ENCODE measurements at regions of chr11 and their contacts with region 1.

Region 1: GRCh38 chr11:33362051-33362910 is 105.1 kb downstream of the HIPK3 start:
- DNase-seq: no peak
- H3K4me3 ChIP-seq: no peak overlapping the region
- H3K27ac ChIP-seq: no peak overlapping the region
- H3K4me1 ChIP-seq: no peaks in the 10 kb centered on the region
- H3K27me3 ChIP-seq: no peaks in the 10 kb centered on the region
- CTCF ChIP-seq: peak; percentile 60 to 77 (median 77)
- POLR2A ChIP-seq: no peak

Region 2: DNA sequence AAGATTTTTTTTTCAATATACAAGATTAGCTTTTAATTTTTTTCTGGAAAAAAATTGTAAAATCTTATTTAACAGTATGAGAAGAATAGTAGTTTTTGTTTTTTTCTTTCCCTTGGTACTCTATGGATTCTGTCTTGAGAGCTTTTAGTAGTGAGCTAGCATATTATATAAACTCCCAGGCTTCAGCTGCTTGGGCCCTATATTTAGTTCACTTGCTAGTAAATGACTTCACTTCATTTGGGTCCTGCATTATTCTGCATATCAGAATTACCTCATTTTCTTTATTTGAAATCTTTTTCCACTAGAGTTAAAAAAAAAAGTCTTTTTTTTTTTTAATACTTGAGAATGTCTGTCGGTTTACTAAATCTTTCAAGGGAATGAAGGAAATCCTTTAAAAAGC is 72.0 kb before region 1 on chr11:
- intact Hi-C with region 1: no loop called
- DNase-seq: no peak
- H3K4me3 ChIP-seq: no peak overlapping the region
- H3K27ac ChIP-seq: no peak overlapping the region
- H3K4me1 ChIP-seq: peaks cover 50% of the 10 kb centered on the region
- H3K27me3 ChIP-seq: no peaks in the 10 kb centered on the region
- CTCF ChIP-seq: no peak
- POLR2A ChIP-seq: no peak

Region 3: DNA sequence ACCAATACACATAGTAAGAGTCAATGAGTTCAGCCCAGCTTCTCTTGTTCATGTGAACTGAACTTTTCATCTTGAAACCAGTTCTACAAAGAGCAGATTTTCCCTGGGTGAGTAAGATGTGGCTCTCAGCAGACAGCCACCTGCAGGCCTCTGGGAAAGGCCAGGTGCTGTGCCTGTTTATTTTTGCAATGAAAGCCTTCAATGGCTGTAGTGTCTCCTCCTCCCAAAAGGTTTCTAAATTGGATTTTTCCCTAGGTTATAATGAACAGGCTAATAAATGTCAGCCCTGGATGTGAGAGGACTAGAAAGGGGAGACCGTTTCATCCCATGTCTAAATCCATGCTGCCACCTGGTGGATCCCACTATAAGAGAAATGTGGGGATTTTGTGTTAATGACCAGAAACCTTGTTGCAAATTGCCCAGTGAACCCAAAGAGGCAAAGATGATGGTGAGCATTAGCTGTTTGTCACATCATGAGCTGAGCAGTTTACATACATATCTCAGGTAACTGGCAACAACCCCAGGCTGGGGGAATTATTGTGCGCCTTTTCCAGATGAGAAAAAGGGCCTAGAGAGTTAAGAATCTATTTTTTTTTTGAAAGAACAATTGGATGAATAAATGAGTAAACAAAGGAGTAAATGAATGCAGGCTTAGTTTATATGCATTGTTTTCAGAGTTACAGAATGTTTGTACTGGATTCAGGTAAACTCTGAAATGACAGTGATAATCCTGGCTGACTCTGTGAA is 325.6 kb after region 1 on chr11:
- intact Hi-C with region 1: loop called (anchors 5 kb)
- DNase-seq: peak in 1 of 2 donors; percentile 62
- H3K4me3 ChIP-seq: no peak overlapping the region
- H3K27ac ChIP-seq: no peak overlapping the region
- H3K4me1 ChIP-seq: peaks cover 37% of the 10 kb centered on the region
- H3K27me3 ChIP-seq: no peaks in the 10 kb centered on the region
- CTCF ChIP-seq: peak; percentile 30 to 57 (median 50)
- POLR2A ChIP-seq: no peak

Measured in vagina (tissue), 2 donors.